AG04450 (cell line): ENCODE measurements at regions of chr7 and their contacts with region 1.

Region 1: DNA sequence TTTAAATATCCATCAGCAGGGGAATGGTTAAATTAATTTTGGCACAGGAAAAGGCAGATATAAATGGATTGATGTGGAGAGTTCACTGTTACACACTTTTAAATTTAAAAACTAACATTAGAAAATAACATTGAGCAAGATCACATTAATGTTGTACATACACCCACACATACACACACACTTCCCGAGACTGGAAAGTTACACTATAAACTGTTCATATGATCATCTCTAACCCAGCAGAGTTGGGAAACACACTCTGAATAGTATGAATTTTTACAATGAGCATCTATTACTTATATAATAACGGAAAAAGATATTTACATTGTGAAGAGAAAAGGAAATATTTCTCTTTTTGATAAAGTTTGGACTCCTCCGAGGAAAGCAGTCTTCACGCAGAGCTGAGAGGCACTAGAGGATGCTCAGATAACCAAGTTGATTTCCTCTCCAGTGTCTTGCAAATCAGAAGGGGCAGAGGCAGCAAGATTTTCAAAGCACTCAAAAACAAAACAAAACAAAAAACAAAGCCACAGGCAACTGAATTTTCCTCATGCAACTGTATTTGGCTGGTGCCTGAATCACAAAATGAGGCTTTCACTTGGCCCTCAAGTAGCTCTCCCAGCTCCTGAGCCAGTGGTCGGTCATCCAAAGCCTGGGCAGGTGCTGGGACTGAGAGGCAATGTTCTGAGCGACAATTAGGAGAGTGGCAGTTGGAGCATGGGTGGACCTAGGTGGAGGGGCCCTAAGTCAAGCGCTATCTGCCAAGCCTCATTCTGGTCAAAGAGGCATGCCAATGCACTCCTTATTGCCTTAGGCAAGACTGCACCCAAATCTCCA is 10.5 kb upstream of the GATAD1 start:
- DNase-seq: no peak
- H3K4me3 ChIP-seq: no peak overlapping the region
- H3K27ac ChIP-seq: no peak overlapping the region
- H3K27me3 ChIP-seq: peaks cover 11% of the 10 kb centered on the region
- CTCF ChIP-seq: no peak

Region 2: GRCh38 chr7:92141161-92141560 is 295.7 kb before region 1 on chr7:
- CTCF ChIA-PET with region 1: no interaction called
- POLR2A ChIA-PET with region 1: no interaction called
- DNase-seq: no peak
- H3K4me3 ChIP-seq: no peak overlapping the region
- H3K27ac ChIP-seq: no peak overlapping the region
- H3K27me3 ChIP-seq: no peaks in the 10 kb centered on the region
- CTCF ChIP-seq: no peak

Region 3: GRCh38 chr7:92421676-92422435 is 15.0 kb before region 1 on chr7:
- CTCF ChIA-PET with region 1: interaction called, 15 read pairs
- POLR2A ChIA-PET with region 1: no interaction called
- DNase-seq: no peak
- H3K4me3 ChIP-seq: no peak overlapping the region
- H3K27ac ChIP-seq: no peak overlapping the region
- H3K27me3 ChIP-seq: peaks cover 4% of the 10 kb centered on the region
- CTCF ChIP-seq: no peak